PC-3 (cell line): ENCODE measurements at regions of chr19 and their contacts with region 1.

Region 1: DNA sequence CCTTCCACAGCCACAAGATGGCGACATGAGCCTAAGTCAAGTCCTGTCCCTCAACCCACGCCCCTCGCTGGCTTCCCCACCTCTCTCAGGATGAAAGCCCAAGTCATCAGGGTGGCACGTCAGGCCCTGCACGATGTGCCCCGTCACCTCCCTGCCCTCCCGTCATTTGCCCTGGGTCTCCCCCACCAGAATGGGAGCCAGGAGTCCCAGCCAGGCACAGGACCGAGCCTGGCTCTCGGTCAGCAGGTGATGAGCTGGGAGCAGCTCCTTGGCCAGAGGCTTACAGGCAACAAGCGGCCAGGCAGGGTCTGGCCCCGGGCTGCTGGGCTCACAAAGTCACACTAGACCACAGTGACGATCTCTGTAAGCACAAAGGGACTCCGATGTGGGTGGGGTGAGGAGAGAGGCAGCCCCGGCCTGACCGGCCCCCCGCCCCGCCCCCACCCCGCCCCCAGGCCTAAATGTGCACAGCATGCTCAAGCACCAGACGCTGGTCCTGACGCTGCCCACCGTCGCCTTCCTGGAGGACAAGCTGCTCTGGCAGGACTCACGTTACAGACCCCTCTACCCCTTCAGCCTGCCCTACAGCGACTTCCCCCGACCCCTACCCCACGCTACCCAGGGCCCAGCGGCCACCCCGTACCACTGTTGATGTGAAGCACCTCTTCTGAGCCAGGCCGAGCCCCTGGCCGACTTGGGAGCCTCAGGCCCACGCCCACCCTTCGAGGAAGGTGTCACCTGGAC is 7.3 kb downstream of the MRPL4 start:
- DNase-seq: peak; percentile 89
- ATAC-seq: peak; percentile 63
- H3K4me3 ChIP-seq: no peak overlapping the region
- H3K27ac ChIP-seq: 0 out of 2 replicates have a peak overlapping the region, but pooled peaks have one; percentile 5
- H3K4me1 ChIP-seq: peaks cover 11% of the 10 kb centered on the region
- H3K27me3 ChIP-seq: no peaks in the 10 kb centered on the region
- CTCF ChIP-seq: peak; percentile 88

Region 2: DNA sequence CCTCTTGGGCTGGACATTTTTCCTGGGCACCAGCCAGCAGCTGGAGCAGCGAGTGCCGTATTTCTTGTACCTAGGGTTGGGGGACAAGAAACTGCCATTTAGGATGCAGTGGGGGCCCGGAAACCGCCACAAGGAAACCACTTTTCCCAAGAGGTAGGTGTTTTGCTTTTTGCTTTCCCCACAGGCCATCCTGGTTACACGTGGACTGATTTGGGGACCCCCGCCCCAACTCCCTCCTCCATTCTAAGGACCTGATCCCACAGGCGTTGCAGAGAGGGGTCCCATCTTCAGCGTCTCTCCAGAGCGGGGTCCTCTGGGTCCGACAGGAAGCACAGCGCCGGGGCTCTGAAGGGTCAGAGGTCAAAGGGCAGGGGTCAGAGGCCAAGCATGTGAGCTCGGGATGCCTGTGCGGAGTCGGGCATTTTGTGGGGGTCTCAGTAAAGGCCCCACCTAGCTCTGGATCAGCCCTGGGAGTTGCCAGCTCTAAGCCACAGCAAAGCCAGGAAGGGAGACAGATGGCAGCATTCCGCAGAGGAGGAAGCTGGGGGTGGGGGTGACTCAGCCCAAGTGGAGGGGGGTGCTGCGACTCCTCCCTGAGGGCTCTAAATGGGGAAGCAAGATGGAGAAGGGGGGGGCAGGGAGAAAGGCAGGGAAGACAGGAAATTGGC is 45.9 kb after region 1 on chr19:
- CTCF ChIA-PET with region 1: no interaction called
- POLR2A ChIA-PET with region 1: no interaction called
- intact Hi-C with region 1: no loop called
- DNase-seq: no peak
- ATAC-seq: no peak
- H3K4me3 ChIP-seq: no peak overlapping the region
- H3K27ac ChIP-seq: no peak overlapping the region
- H3K4me1 ChIP-seq: peaks cover 8% of the 10 kb centered on the region
- H3K27me3 ChIP-seq: no peaks in the 10 kb centered on the region
- CTCF ChIP-seq: no peak

Region 3: DNA sequence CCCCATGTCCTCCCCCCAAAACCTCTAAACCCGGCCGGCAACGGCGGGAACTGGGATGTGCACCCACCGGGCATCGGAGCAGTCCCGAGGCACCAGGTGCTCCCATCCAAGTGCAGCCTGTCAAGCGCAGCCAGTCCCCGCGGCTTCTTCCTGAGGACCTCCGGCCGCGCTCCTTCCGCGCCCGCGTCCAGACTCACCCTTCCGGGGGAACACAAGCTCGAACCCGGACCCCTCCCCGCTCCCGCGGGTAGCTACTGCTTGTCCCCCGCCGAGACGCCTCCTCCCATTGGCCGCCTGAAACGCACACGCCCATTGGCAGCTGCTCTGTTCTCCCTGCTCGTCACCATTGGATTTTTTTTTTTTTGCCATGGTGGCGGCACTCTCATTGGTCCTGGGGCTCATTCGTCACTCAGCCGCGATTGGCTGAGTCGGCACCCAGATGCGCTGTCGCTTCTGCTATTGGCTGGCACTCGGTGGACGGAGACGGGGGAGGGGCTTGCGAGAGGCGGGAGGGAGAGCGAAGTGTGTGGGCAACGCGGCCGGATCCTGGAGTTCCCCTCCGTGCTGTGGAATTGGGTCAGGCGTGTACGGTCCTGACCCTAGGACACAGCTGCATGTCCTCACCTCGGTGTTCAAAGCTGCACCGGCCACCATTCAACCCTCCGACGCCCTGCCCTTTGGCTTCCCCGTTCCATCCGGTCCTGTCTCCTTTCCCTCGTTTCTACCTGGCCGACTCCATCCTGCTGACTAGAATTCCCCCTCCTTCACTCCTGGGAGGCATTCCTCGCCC is 121.2 kb after region 1 on chr19 and contains the start of gene TYK2:
- CTCF ChIA-PET with region 1: interaction called, 4 read pairs
- POLR2A ChIA-PET with region 1: interaction called, 10 read pairs
- intact Hi-C with region 1: no loop called
- DNase-seq: peak; percentile 100
- ATAC-seq: peak; percentile 94
- H3K4me3 ChIP-seq: peak within 1 kb of the TSS; percentile 91
- H3K27ac ChIP-seq: peak within 1 kb of the TSS; percentile 40
- H3K4me1 ChIP-seq: peaks cover 9% of the 10 kb centered on the region
- H3K27me3 ChIP-seq: no peaks in the 10 kb centered on the region
- CTCF ChIP-seq: no peak
- total RNA-seq, gene TYK2: 177 and 201 TPM in 2 replicates

Region 4: DNA sequence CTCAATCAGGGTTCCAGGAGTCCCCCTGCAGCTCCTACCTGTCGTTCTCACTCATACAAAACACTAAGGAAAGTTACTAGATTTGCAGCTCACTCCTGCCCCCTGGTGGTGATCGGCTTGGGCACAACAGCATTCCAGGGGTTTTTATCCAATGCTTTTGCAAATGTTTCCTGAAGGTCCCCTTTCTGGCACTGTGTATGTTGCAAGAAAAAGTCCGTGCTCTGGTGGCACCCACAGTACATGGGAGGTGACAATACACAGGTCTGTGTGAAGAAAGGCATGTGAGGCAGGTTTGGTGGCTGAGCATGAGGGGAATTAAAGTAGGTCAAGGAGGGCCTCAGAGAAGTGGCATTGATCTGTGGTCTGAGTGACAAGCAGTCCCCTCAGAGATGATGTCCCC is 129.6 kb after region 1 on chr19:
- CTCF ChIA-PET with region 1: interaction called, 12 read pairs
- POLR2A ChIA-PET with region 1: no interaction called
- intact Hi-C with region 1: loop called (anchors 2 kb)
- DNase-seq: peak; percentile 94
- ATAC-seq: peak; percentile 77
- H3K4me3 ChIP-seq: no peak overlapping the region
- H3K27ac ChIP-seq: no peak overlapping the region
- H3K4me1 ChIP-seq: no peaks in the 10 kb centered on the region
- H3K27me3 ChIP-seq: no peaks in the 10 kb centered on the region
- CTCF ChIP-seq: peak; percentile 98